ENCODE measurements at regions of chr3 and their contacts with region 1.

Region 1: GRCh38 chr3:141279077-141279967 is 47.7 kb downstream of the PXYLP1 start:
- DNase-seq: no peak
- ATAC-seq: peak; percentile 54

Region 2: GRCh38 chr3:141000027-141000663 is 279.2 kb before region 1 on chr3:
- intact Hi-C with region 1: loop called (anchors 5 kb)
- DNase-seq: no peak
- ATAC-seq: peak; percentile 95

Region 3: GRCh38 chr3:141164852-141165251 is 114.5 kb before region 1 on chr3:
- intact Hi-C with region 1: no loop called
- DNase-seq: no peak
- ATAC-seq: peak; percentile 65

Region 4: DNA sequence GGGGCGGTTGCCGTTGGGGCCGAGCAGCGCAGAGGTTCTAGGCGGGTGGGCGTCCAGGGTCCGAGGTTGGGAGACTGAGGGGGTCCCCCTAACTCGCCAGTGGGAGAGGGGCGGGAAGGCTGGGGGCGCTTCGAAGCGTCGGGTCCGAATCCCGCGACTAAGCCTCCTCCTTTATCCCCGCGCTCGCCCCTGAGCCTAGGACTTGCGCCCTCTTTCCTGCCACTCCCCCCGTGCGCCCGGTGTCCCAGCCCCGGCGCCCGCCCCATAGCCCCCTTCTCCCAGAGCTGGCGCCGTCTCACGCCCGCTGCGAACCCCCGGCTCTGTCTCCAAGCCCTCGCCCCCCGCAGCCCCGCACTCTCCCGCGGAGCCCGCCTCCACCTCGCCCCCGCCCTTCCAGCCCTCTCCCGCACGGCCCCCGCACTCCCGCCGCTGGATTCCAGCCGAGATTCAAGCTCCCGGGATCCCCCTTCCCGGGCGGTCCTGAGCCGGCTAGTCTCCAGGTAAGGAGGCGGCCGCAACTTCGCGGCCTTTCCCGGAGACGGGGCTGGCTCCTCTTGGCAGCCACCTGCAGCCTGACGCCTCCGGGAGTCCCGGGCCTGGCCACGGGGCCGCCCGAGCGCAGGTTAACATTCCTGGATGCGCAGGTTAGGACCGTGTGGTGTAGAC is 47.3 kb before region 1 on chr3:
- intact Hi-C with region 1: loop called (anchors 1 kb)
- DNase-seq: peak; percentile 79
- ATAC-seq: peak; percentile 8